Activated T-helper 1 cell treated with anti-CD3 and anti-CD28 coated beads, Interleukin-12 subunit alpha, Interleukin-12 subunit beta, Interleukin-2, Interleukin-4 antibody, amounts not matched to agents 30 ng/mL and 10 ng/mL and 1 ng/mL, durations not matched to agents 14 hours and 24 hours and 36 hours (primary cell): ENCODE measurements at regions of chr2 and their contacts with region 1.

Region 1: GRCh38 chr2:197499594-197500526 is at the starts of genes HSPD1 and HSPE1:
- DNase-seq: peak; percentile 98
- H3K4me3 Mint-ChIP-seq: peak within 1 kb of the TSS; percentile 100
- H3K27ac Mint-ChIP-seq: peak within 1 kb of the TSS; percentile 99
- H3K4me1 Mint-ChIP-seq: peaks cover 50% of the 10 kb centered on the region
- H3K27me3 Mint-ChIP-seq: no peaks in the 10 kb centered on the region
- total RNA-seq, gene HSPD1: 811 and 821 TPM in 2 replicates
- total RNA-seq, gene HSPE1: 325 and 343 TPM in 2 replicates

Region 2: DNA sequence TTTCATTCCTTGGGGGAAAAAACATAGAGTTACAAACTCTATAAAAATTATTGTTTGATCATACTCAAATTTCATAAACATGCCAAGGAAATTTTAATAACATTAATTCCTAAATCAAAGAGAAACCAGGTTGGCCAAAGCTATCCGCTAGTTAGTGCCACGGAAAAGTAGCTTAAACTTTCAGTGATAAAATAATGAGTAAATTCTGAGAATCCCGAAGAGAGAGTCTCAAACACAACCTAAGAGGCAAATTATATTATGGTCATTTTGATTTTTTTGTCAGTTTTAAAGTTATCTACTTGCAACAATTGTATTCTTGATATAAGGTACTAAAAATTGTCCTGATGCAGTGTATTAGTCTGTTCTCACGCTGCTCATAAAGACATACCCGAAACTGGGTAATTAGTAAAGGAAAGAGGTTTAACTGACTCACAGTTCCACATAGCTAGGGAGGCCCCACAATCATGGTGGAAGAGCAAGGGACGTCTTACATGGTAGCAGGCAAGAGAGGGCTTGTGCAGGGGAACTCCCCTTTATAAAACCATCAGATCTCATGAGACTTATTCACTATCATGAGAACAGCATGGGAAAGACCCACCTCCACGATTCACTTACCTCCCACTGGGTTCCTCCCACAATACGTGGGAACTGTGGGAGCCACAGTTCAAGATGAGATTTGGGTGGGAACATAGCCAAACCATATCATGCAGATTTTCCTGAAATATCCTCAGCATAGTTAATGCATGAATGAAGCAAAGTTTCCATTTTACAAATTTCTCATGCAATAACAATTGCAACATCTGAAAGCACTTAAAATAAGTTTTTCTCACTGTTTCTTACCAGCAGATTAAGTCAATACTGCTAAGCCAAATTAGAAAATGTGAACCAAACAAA is 1122.6 kb before region 1 on chr2:
- intact Hi-C with region 1: no loop called
- DNase-seq: no peak
- H3K4me3 Mint-ChIP-seq: no peak overlapping the region
- H3K27ac Mint-ChIP-seq: no peak overlapping the region
- H3K4me1 Mint-ChIP-seq: no peaks in the 10 kb centered on the region
- H3K27me3 Mint-ChIP-seq: peaks cover 5% of the 10 kb centered on the region

Region 3: DNA sequence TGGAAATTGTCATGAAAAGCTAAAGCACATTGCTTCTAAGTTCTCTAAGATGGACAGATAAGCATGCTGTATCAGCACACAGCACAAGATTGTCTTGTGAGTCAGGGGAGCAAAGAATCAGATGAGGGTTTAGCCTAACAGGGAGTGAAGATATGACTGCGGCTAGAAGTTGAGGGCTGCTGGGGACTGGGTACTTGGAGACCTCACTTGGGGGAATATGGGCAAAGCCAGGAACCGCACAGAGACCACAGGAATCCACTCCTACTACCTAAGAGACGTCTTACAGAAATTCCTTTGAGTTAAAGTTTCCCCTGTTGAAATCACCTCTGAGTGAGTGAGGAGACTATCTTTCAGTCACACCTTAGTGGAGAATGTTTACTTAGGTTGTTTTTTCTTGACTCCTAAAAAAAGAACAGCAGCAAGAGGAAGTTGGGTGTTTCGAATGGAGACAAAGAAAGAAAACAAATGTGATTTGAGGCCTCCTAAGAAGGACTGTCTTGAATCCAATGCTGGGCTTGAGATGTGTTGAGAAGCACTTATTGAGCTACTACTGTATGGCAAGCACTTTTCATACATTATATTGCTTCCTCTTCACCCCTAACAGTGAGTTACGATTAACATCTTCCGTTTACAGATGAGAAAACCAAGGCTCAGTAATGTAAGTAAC is 290.0 kb before region 1 on chr2:
- intact Hi-C with region 1: loop called (anchors 2 kb)
- DNase-seq: peak; percentile 53
- H3K4me3 Mint-ChIP-seq: peak overlapping the region; percentile 69
- H3K27ac Mint-ChIP-seq: peak overlapping the region; percentile 97
- H3K4me1 Mint-ChIP-seq: peaks cover 95% of the 10 kb centered on the region
- H3K27me3 Mint-ChIP-seq: no peaks in the 10 kb centered on the region

Region 4: GRCh38 chr2:197453161-197453914 is 46.5 kb before region 1 on chr2 and contains the start of gene COQ10B:
- intact Hi-C with region 1: loop called (anchors 1 kb)
- DNase-seq: peak; percentile 99
- H3K4me3 Mint-ChIP-seq: peak within 1 kb of the TSS; percentile 99
- H3K27ac Mint-ChIP-seq: peak within 1 kb of the TSS; percentile 100
- H3K4me1 Mint-ChIP-seq: peaks cover 40% of the 10 kb centered on the region
- H3K27me3 Mint-ChIP-seq: no peaks in the 10 kb centered on the region
- total RNA-seq, gene COQ10B: 26.9 and 28.8 TPM in 2 replicates

Region 5: GRCh38 chr2:197515739-197516392 is 16.0 kb after region 1 on chr2 and contains the start of gene MOB4:
- intact Hi-C with region 1: loop called (anchors 1 kb)
- DNase-seq: peak; percentile 95
- H3K4me3 Mint-ChIP-seq: peak within 1 kb of the TSS; percentile 98
- H3K27ac Mint-ChIP-seq: peak within 1 kb of the TSS; percentile 90
- H3K4me1 Mint-ChIP-seq: peaks cover 32% of the 10 kb centered on the region
- H3K27me3 Mint-ChIP-seq: no peaks in the 10 kb centered on the region
- total RNA-seq, gene MOB4: 25.1 and 27.2 TPM in 2 replicates

Region 6: GRCh38 chr2:197975931-197976519 is 476.2 kb after region 1 on chr2:
- intact Hi-C with region 1: no loop called
- DNase-seq: no peak
- H3K4me3 Mint-ChIP-seq: no peak overlapping the region
- H3K27ac Mint-ChIP-seq: no peak overlapping the region
- H3K4me1 Mint-ChIP-seq: no peaks in the 10 kb centered on the region
- H3K27me3 Mint-ChIP-seq: no peaks in the 10 kb centered on the region

Region 7: GRCh38 chr2:198296665-198297308 is 796.9 kb after region 1 on chr2:
- intact Hi-C with region 1: loop called (anchors 5 kb)
- DNase-seq: peak; percentile 20
- H3K4me3 Mint-ChIP-seq: no peak overlapping the region
- H3K27ac Mint-ChIP-seq: no peak overlapping the region
- H3K4me1 Mint-ChIP-seq: no peaks in the 10 kb centered on the region
- H3K27me3 Mint-ChIP-seq: peaks cover 20% of the 10 kb centered on the region